CD8-positive, alpha-beta T cell (primary cell): ENCODE measurements at regions of chr18 and their contacts with region 1.

Region 1: GRCh38 chr18:23437357-23438045 is 15.6 kb upstream of the RIOK3 start:
- DNase-seq: peak; percentile 46 to 81 (median 77)
- ATAC-seq: peak; percentile 95
- H3K4me3 ChIP-seq: peak overlapping the region; percentile 81 to 96
- H3K4me3 Mint-ChIP-seq: peak overlapping the region; percentile 88
- H3K27ac ChIP-seq: peak overlapping the region in 1 of 2 experiments; percentile 21
- H3K27ac Mint-ChIP-seq: no peak overlapping the region
- H3K4me1 ChIP-seq: peaks cover 17% of the 10 kb centered on the region
- H3K4me1 Mint-ChIP-seq: peaks cover 22% of the 10 kb centered on the region
- H3K27me3 ChIP-seq: peaks cover 0 to 2% of the 10 kb centered on the region in 2 experiments
- H3K27me3 Mint-ChIP-seq: no peaks in the 10 kb centered on the region
- CTCF ChIP-seq: no peak

Region 2: GRCh38 chr18:23452728-23453679 is 15.5 kb after region 1 on chr18 and contains the start of gene RIOK3:
- CTCF ChIA-PET with region 1: no interaction called
- POLR2A ChIA-PET with region 1: interaction called, 3 read pairs
- intact Hi-C with region 1: loop called in 1 of 2 experiments (anchors 1 kb)
- DNase-seq: peak; percentile 71 to 93 (median 85)
- ATAC-seq: peak; percentile 90
- H3K4me3 ChIP-seq: peak within 1 kb of the TSS; percentile 69 to 97
- H3K4me3 Mint-ChIP-seq: peak within 1 kb of the TSS; percentile 99
- H3K27ac ChIP-seq: peak within 1 kb of the TSS; percentile 65 to 85
- H3K27ac Mint-ChIP-seq: peak within 1 kb of the TSS; percentile 94
- H3K4me1 ChIP-seq: peaks cover 32% of the 10 kb centered on the region
- H3K4me1 Mint-ChIP-seq: peaks cover 49% of the 10 kb centered on the region
- H3K27me3 ChIP-seq: no peaks in the 10 kb centered on the region
- H3K27me3 Mint-ChIP-seq: no peaks in the 10 kb centered on the region
- CTCF ChIP-seq: no peak
- total RNA-seq, gene RIOK3: 159 to 185 TPM

Region 3: GRCh38 chr18:23487738-23488570 is 50.5 kb after region 1 on chr18:
- CTCF ChIA-PET with region 1: no interaction called
- POLR2A ChIA-PET with region 1: no interaction called
- intact Hi-C with region 1: no loop called
- DNase-seq: peak in 8 of 9 experiments; percentile 26 to 59 (median 48)
- ATAC-seq: peak; percentile 73
- H3K4me3 ChIP-seq: peak overlapping the region; percentile 2 to 24
- H3K4me3 Mint-ChIP-seq: peak overlapping the region; percentile 76
- H3K27ac ChIP-seq: peak overlapping the region; percentile 31 to 60
- H3K27ac Mint-ChIP-seq: peak overlapping the region; percentile 77
- H3K4me1 ChIP-seq: peaks cover 12% of the 10 kb centered on the region
- H3K4me1 Mint-ChIP-seq: peaks cover 15% of the 10 kb centered on the region
- H3K27me3 ChIP-seq: no peaks in the 10 kb centered on the region
- H3K27me3 Mint-ChIP-seq: no peaks in the 10 kb centered on the region
- CTCF ChIP-seq: no peak

Region 4: DNA sequence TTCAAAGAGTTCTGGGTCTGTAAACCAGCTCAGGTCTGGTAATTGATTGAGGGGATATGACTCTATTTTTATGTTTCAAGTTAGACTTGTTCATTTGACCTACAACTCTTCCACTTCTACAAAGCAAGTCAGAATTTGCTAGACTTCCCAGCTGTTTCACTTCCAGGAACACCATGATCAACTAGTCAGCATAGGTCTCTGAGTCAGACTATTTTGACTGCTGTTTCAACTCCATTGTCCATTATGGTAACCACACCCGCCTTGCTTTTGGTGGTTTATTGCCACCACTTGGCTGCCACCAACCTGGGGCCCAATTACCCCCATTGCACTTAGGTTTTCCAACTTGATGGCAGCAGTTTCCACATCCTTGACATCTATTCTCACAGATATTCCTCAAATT is 368.4 kb after region 1 on chr18:
- CTCF ChIA-PET with region 1: no interaction called
- POLR2A ChIA-PET with region 1: no interaction called
- intact Hi-C with region 1: no loop called
- DNase-seq: no peak
- ATAC-seq: no peak
- H3K4me3 ChIP-seq: no peak overlapping the region
- H3K4me3 Mint-ChIP-seq: no peak overlapping the region
- H3K27ac ChIP-seq: no peak overlapping the region
- H3K27ac Mint-ChIP-seq: no peak overlapping the region
- H3K4me1 ChIP-seq: peaks cover 13% of the 10 kb centered on the region
- H3K4me1 Mint-ChIP-seq: peaks cover 17% of the 10 kb centered on the region
- H3K27me3 ChIP-seq: no peaks in the 10 kb centered on the region
- H3K27me3 Mint-ChIP-seq: peaks cover 3% of the 10 kb centered on the region
- CTCF ChIP-seq: no peak